Activated CD4-positive, alpha-beta T cell treated with anti-CD3 and anti-CD28 coated beads for 36 hours (primary cell): ENCODE measurements at regions of chr1 and their contacts with region 1.

Region 1: GRCh38 chr1:1471389-1472052 is at the start of gene ATAD3B:
- DNase-seq: peak; percentile 98
- ATAC-seq: peak; percentile 97
- H3K4me3 Mint-ChIP-seq: peak within 1 kb of the TSS; percentile 89
- H3K27ac Mint-ChIP-seq: peak within 1 kb of the TSS; percentile 67
- H3K4me1 Mint-ChIP-seq: peaks cover 21% of the 10 kb centered on the region
- H3K27me3 Mint-ChIP-seq: no peaks in the 10 kb centered on the region
- total RNA-seq, gene ATAD3B: 26.2 to 39.2 TPM

Region 2: DNA sequence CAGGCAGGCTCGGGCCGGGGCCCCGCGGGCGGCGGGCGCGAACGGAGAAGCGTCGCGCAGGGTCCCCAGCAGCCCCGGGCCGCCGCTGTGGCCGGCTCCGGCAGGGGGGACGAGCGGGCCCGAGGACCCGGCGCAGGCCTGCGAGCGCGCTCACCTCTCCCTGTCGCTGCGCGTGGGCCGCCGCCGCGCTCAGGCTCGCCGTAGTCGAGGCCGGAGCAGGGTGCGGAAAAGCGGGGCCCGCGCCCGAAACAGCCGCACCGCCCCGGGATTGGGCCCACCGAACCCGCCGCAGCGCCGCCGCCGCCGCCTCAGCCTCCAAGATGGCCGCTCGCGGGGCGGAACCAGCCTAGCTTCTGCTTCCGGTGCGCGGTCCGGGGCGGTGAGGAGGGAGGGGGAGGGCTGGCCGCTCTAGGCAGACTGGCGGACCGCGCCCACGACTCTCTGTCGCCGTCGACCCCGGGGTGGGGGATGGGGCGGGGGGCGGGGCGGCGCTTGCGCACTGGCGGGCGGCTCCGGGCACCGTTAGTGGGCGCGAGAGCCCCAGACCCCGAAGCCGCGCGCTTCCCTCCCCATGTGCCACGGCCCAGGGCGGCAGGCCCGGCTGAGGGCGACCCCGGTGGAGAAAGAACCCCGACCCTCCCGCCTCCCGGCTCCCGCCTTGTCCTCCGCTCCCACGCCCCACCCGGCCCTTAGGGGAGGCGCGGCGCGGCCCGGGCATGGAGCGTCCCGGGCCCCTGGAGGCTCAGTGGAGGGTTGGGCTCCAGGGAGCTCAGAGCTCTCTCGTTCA is 197.8 kb before region 1 on chr1 and contains the start of gene UBE2J2:
- CTCF ChIA-PET with region 1: no interaction called
- POLR2A ChIA-PET with region 1: no interaction called
- intact Hi-C with region 1: loop called in 1 of 2 experiments (anchors 1 kb)
- DNase-seq: peak; percentile 97
- ATAC-seq: peak; percentile 94
- H3K4me3 Mint-ChIP-seq: peak within 1 kb of the TSS; percentile 85
- H3K27ac Mint-ChIP-seq: peak within 1 kb of the TSS; percentile 83
- H3K4me1 Mint-ChIP-seq: peaks cover 36% of the 10 kb centered on the region
- H3K27me3 Mint-ChIP-seq: no peaks in the 10 kb centered on the region
- total RNA-seq, gene UBE2J2: 57.4 to 60.2 TPM

Region 3: GRCh38 chr1:1349256-1350012 is 122.1 kb before region 1 on chr1 and contains the start of gene DVL1:
- CTCF ChIA-PET with region 1: no interaction called
- POLR2A ChIA-PET with region 1: no interaction called
- intact Hi-C with region 1: loop called in 1 of 2 experiments (anchors 1 kb)
- DNase-seq: peak; percentile 81
- ATAC-seq: peak; percentile 71
- H3K4me3 Mint-ChIP-seq: peak within 1 kb of the TSS; percentile 74
- H3K27ac Mint-ChIP-seq: no peak within 1 kb of the TSS
- H3K4me1 Mint-ChIP-seq: peaks cover 25% of the 10 kb centered on the region
- H3K27me3 Mint-ChIP-seq: peaks cover 11% of the 10 kb centered on the region
- total RNA-seq, gene DVL1: 35.3 to 35.5 TPM

Region 4: DNA sequence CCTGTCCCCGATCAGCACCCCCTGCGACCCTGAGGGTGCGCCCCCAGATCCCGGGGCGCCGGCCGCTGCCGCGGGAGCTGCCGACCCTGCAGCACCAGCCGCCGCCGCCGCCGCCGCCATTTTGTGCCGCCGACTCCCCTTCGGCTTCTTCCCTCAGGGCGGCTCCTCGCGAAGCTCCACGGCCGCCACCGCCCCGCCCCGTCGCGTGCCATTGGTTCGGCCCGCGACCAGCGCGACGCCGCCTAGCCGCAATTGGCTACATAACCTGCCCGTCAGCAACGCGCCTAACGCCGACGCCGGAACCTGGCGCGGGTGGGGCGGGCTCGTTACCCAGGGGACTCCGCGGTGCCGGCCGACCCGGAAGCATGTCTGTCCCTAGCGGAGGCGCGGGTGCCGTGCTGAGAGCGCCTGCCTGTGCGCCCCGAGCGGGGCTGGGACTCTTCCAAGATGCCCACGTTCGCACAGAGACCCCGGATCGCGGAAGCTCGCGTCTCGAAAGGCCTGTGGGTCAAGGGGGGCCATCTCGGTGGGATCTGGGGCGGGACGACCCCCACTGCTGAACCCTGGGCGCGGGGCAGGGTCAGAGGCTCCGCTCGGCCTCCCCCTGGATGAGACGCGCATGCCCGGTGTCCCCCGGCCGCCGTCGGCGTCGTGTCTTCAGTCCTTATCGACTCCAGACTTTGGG is 72.2 kb before region 1 on chr1 and contains the start of gene CCNL2:
- CTCF ChIA-PET with region 1: no interaction called
- POLR2A ChIA-PET with region 1: no interaction called
- intact Hi-C with region 1: loop called in 1 of 2 experiments (anchors 1 kb)
- DNase-seq: peak; percentile 100
- ATAC-seq: peak; percentile 97
- H3K4me3 Mint-ChIP-seq: peak within 1 kb of the TSS; percentile 93
- H3K27ac Mint-ChIP-seq: peak within 1 kb of the TSS; percentile 91
- H3K4me1 Mint-ChIP-seq: peaks cover 52% of the 10 kb centered on the region
- H3K27me3 Mint-ChIP-seq: no peaks in the 10 kb centered on the region
- total RNA-seq, gene CCNL2: 73.6 to 89.7 TPM

Region 5: DNA sequence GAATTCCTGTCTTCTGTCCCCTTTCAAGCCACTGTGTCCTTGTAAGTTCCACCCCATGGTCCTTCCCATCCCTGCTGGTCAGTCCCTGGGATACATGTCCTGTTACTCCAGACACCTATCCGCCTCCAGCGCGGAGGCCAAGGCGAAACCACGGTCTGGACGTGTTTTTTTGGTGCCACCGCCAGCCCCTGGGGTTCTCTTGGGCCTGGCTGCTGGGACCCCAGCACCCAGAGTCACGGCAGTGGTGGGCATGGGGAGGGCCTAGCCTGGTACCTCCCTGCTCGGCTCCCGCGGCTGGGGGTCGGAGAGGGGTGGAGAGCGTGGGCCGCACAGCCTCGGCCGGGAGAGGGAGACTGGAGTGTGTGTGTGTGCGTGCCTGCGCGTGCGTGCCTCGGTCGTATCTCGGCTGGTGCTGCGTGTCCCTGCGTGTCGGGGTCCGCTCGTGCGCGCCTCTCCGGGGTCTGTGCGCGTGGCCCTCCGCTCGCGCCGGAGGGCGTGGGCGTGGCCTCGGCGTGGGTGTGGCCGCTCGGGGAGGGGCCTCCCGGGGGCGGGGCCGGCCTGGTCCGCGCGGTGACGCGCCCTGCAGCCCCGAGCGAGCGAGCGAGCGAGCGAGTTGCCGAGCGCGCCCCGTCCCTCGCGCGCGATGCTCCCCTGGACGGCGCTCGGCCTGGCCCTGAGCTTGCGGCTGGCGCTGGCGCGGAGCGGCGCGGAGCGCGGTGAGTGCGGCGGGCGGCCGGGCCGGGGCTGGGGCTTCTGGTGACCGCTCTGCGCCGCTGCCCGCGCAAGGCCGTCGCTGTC is 36.2 kb before region 1 on chr1 and contains the start of gene VWA1:
- CTCF ChIA-PET with region 1: no interaction called
- POLR2A ChIA-PET with region 1: no interaction called
- intact Hi-C with region 1: loop called in 1 of 2 experiments (anchors 1 kb)
- DNase-seq: peak; percentile 82
- ATAC-seq: peak; percentile 68
- H3K4me3 Mint-ChIP-seq: peak within 1 kb of the TSS; percentile 45
- H3K27ac Mint-ChIP-seq: no peak within 1 kb of the TSS
- H3K4me1 Mint-ChIP-seq: peaks cover 10% of the 10 kb centered on the region
- H3K27me3 Mint-ChIP-seq: peaks cover 14% of the 10 kb centered on the region
- total RNA-seq, gene VWA1: 0.56 to 0.78 TPM

Region 6: DNA sequence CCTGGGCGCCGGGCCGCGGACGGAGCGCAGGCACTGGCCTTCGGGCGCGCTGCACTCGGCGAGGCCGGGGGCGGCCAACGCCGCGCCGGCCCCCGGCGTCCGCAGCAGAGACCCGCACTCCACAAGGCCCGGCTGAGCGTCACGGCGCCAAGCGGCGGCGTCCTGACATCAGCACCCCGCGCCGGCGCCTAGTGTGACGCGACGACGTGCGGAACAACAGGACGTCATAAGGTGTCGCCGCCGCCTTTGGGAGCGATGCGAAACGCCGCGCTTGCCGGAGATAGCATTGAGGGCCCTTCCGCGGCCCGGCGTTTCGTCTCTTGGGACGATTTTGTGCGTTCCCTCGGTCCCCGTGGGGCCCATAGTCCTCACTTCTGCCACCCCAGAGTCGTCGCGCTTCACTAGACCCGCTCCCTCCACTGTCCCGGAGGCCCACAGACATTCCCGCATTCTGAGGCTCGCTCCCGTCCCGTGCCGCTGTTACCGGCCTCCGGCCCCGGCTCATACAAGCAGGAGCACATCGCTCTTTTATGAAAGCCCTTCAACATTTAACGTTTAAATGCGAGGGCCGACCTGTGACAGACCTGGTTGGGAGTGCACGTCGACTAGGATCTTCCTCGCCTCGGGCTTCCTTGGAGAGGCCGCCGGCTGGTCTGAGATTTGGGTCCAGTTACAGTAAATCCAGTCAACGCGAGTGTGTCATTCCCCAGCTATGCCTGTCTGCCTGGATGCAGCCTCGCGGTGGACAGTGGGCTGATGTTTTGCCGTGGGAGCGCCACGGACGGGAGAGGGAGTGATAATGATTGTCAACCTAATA is 103.4 kb after region 1 on chr1 and contains the start of gene SSU72:
- CTCF ChIA-PET with region 1: no interaction called
- POLR2A ChIA-PET with region 1: no interaction called
- intact Hi-C with region 1: loop called in 1 of 2 experiments (anchors 1 kb)
- DNase-seq: peak; percentile 97
- ATAC-seq: peak; percentile 84
- H3K4me3 Mint-ChIP-seq: peak within 1 kb of the TSS; percentile 99
- H3K27ac Mint-ChIP-seq: peak within 1 kb of the TSS; percentile 98
- H3K4me1 Mint-ChIP-seq: peaks cover 28% of the 10 kb centered on the region
- H3K27me3 Mint-ChIP-seq: no peaks in the 10 kb centered on the region
- total RNA-seq, gene SSU72: 105 to 123 TPM

Region 7: GRCh38 chr1:1919304-1920056 is 448.0 kb after region 1 on chr1:
- CTCF ChIA-PET with region 1: no interaction called
- POLR2A ChIA-PET with region 1: no interaction called
- intact Hi-C with region 1: loop called in 1 of 2 experiments (anchors 2 kb)
- DNase-seq: peak; percentile 100
- ATAC-seq: peak; percentile 92
- H3K4me3 Mint-ChIP-seq: peak overlapping the region; percentile 62
- H3K27ac Mint-ChIP-seq: no peak overlapping the region
- H3K4me1 Mint-ChIP-seq: peaks cover 4% of the 10 kb centered on the region
- H3K27me3 Mint-ChIP-seq: no peaks in the 10 kb centered on the region